ENCODE measurements at regions of chr1 and their contacts with region 1.

Region 1: DNA sequence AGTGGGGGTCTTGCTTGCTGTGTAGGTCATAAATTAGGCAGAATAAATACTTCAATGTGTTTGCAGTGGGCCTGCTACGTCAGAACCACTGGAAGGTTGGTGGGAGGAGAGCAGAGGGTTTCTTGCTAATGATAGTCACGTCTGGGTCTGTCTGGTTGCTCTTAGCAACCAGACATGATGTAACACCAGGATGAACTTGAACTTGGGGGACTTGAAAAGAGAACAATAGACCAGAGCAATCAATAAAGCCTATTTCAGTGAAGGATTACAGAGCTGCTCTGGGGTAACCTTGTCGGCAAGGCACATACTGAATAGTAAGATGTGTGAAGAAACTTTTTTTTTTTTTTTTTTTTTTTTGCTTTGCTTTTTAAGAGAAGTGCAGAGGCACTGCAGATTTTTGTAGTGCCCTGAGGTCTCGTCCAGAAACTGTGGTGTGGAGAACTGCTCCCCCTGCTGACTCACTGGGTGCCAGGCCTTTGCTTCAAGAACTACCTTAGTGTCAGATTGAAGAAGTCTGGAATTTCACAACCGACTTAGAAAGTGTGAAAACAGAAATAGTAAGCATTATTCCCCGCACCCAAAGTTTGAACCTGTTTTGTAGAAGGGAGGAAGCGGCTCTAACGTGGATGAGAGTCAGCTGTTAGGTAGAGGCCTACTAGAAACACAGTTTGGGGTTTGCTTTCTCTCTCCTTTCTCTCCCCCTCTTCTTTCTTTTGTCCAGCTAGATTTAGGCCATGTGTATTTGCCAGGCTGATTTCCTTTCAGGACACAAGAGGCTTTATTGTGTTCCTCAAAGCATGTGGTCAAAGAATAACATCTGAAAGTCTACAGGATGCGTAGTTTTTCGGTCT is 271.6 kb downstream of the TM2D1 start:
- DNase-seq: peak; percentile 85 to 89
- ATAC-seq: peak; percentile 71 to 75
- H3K4me3 ChIP-seq: no peak overlapping the region
- H3K27ac ChIP-seq: peak overlapping the region; percentile 70 to 82 (median 73)
- H3K4me1 ChIP-seq: peaks cover 60 to 61% of the 10 kb centered on the region in 2 donors
- H3K27me3 ChIP-seq: no peaks in the 10 kb centered on the region
- CTCF ChIP-seq: peak; percentile 65 to 82 (median 73)
- POLR2A ChIP-seq: no peak

Region 2: GRCh38 chr1:60848583-60849188 is 604.6 kb before region 1 on chr1:
- in situ Hi-C with region 1: loop called in 2 of 4 experiments (anchors 25 kb)
- intact Hi-C with region 1: loop called (anchors 5 kb)
- DNase-seq: no peak
- ATAC-seq: no peak
- H3K4me3 ChIP-seq: no peak overlapping the region
- H3K27ac ChIP-seq: no peak overlapping the region
- H3K4me1 ChIP-seq: no peaks in the 10 kb centered on the region
- H3K27me3 ChIP-seq: no peaks in the 10 kb centered on the region
- CTCF ChIP-seq: peak; percentile 51 to 63 (median 57)
- POLR2A ChIP-seq: no peak

Region 3: DNA sequence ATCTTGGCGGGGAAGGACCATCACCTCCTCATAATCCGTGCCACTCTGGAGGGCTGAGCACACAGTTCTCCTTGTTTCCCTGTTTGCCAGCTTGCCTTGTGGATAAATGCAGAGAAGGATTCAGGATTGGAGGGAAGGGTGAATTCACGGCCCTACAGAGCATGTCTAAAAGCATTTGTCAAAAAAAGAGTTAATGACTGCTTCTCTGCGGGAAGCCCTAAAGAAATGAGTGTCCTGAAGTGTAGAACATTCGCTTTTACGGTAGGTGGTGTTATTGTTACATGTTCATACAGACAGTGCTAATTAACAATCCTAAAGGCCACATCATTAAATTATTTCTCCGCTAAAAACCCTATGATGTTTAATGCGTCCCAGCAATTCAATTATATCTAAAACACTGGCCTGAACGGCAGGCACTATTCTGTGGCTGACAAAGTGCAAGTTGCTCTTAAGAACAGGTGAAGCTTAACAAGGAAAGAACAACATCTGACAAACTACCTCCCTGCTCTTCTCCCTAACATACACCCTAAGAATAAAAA is 483.3 kb before region 1 on chr1:
- in situ Hi-C with region 1: loop called in 1 of 4 experiments (anchors 10 kb)
- intact Hi-C with region 1: loop called (anchors 2 kb)
- DNase-seq: no peak
- ATAC-seq: peak; percentile 58 to 73
- H3K4me3 ChIP-seq: no peak overlapping the region
- H3K27ac ChIP-seq: no peak overlapping the region
- H3K4me1 ChIP-seq: peaks cover 9 to 11% of the 10 kb centered on the region in 2 donors
- H3K27me3 ChIP-seq: no peaks in the 10 kb centered on the region
- CTCF ChIP-seq: peak; percentile 28 to 59 (median 40)
- POLR2A ChIP-seq: no peak

Region 4: DNA sequence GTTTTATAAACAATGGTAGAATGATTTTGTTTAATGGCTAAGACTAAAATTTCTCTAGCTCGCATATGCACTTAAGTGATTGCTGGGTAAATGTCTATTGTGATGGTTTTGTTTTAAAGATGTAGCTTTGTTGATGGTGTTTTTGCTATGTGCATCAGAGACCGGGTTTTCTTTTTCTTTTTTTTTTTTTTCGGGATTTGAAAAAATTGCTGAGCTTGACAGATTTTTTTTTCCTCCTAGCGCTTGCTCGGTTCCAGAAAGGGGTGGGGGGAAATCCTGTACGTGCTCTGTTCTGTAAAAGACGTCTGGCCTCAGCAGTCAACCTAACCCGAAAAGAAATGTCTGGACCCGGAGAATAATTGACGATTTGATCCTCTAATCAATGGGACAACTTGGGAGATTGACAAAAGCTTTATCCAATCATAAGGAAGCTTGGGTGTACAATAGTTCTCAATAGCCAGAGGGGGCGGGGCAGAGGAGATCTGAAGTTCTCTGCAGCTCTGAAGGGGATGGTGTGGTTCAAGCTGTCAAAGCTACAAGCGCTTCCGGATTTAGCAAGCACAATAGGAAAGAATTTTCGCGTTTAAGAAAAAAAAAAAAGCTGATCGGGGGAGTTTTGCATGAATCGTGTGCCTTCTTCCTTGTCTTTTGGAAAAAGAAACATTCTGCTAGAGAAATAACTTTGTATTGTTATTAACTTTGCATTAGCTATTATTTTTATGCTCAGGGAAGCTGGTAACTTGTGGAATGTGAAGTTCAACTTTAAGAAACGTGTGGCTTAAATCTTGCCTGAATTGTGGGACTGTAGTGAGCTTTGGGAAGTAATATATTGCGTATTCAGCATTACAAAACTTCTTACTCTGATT is 375.4 kb before region 1 on chr1:
- in situ Hi-C with region 1: no loop called
- intact Hi-C with region 1: loop called (anchors 1 kb)
- DNase-seq: peak; percentile 84 to 88
- ATAC-seq: peak; percentile 47 to 55
- H3K4me3 ChIP-seq: peak overlapping the region; percentile 58 to 96 (median 73)
- H3K27ac ChIP-seq: peak overlapping the region; percentile 82 to 96 (median 92)
- H3K4me1 ChIP-seq: peaks cover 32 to 39% of the 10 kb centered on the region in 2 donors
- H3K27me3 ChIP-seq: no peaks in the 10 kb centered on the region
- CTCF ChIP-seq: no peak
- POLR2A ChIP-seq: peak in 1 of 2 donors; percentile 17

Region 5: DNA sequence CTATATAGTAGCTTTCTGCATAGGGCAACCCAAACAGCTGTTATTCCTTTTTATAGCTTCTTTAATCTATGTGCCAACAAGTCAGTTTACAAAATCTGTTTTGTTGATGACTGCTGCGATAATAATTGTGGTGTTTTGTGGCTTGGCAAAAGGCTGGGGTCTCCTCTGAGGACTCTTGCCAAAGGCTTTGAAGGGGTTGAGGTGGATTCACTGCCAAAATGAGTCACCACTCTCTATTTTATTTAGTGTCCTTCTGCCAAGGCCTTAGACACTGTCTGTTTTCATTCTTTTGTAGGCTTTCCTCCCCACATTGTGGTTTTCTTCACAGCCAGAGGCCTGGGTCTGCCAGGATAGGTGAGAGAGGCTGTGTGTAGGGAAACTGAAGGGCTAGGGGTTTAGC is 209.2 kb before region 1 on chr1:
- in situ Hi-C with region 1: no loop called
- intact Hi-C with region 1: loop called (anchors 10 kb)
- DNase-seq: peak in 1 of 2 donors; percentile 31
- ATAC-seq: peak; percentile 23 to 58
- H3K4me3 ChIP-seq: no peak overlapping the region
- H3K27ac ChIP-seq: peak overlapping the region; percentile 83 to 89 (median 86)
- H3K4me1 ChIP-seq: peaks cover 69% of the 10 kb centered on the region in 2 donors
- H3K27me3 ChIP-seq: no peaks in the 10 kb centered on the region
- CTCF ChIP-seq: no peak
- POLR2A ChIP-seq: no peak

Region 6: GRCh38 chr1:61641578-61642336 is 188.4 kb after region 1 on chr1:
- in situ Hi-C with region 1: no loop called
- intact Hi-C with region 1: loop called (anchors 1 kb)
- DNase-seq: peak; percentile 57 to 71
- ATAC-seq: peak; percentile 60 to 79
- H3K4me3 ChIP-seq: peak overlapping the region; percentile 18 to 36 (median 24)
- H3K27ac ChIP-seq: peak overlapping the region; percentile 32 to 59 (median 51)
- H3K4me1 ChIP-seq: peaks cover 0 to 22% of the 10 kb centered on the region in 2 donors
- H3K27me3 ChIP-seq: no peaks in the 10 kb centered on the region
- CTCF ChIP-seq: peak; percentile 24 to 78 (median 53)
- POLR2A ChIP-seq: no peak